HEK293 (cell line): ENCODE measurements at regions of chr9 and their contacts with region 1.

Region 1: DNA sequence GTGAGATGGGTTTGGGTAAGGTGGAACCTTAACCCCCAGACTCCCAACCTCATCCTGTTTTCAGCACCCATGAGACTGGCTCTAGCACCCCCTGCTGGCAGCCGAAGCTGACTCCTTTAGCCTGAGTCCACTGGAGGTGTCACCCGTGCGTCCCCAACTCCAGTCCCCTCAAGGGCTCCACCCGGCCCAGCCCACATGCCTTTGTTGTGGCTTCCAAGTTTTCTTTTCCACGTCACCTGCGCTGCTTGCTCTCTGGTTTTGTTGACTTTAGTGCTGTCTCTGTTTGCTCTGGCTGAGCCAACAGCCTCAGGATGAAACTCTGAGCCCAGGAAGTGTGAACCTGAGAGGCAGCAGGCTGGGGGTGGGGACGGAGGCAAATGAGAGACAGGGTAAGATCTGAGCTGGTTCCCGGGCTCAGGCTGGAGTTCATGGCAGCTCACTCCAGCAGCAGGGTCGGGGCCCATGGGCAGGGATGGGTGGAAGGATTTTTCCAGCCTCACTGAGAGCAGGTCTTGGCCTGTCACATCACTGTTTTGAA is 13.2 kb upstream of the AQP7 start:
- H3K4me3 ChIP-seq: no peak overlapping the region
- H3K27ac ChIP-seq: no peak overlapping the region
- H3K4me1 ChIP-seq: 0 out of 2 replicates have a peak, but pooled peaks cover 3% of the 10 kb centered on the region
- CTCF ChIP-seq: peak; percentile 72

Region 2: GRCh38 chr9:33404788-33405362 is 10.7 kb before region 1 on chr9:
- CTCF ChIA-PET with region 1: interaction called, 51 read pairs
- POLR2A ChIA-PET with region 1: no interaction called
- H3K4me3 ChIP-seq: no peak overlapping the region
- H3K27ac ChIP-seq: no peak overlapping the region
- H3K4me1 ChIP-seq: no peaks in the 10 kb centered on the region
- CTCF ChIP-seq: no peak

Region 3: DNA sequence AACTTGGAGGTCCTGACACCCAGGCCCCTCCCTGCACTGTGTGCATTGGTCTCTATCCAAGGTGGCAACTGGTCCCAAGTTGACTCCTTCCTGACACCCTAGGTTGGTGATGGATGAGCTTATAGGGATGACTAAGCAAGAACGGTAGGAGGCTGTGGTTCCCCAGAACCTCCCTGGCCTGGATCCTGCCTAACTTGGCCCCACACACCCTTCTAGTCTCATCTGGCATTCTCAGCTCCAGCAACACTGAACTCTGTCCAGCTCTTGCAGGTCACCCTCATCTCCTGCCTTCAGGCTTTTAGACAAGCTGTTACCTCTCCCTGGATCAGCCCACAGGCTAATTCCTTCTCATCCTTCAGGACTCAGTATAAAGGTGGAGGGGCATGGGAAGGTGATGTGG is 15.4 kb after region 1 on chr9:
- CTCF ChIA-PET with region 1: interaction called, 24 read pairs
- POLR2A ChIA-PET with region 1: no interaction called
- H3K4me3 ChIP-seq: no peak overlapping the region
- H3K27ac ChIP-seq: no peak overlapping the region
- H3K4me1 ChIP-seq: no peaks in the 10 kb centered on the region
- CTCF ChIP-seq: no peak

Region 4: DNA sequence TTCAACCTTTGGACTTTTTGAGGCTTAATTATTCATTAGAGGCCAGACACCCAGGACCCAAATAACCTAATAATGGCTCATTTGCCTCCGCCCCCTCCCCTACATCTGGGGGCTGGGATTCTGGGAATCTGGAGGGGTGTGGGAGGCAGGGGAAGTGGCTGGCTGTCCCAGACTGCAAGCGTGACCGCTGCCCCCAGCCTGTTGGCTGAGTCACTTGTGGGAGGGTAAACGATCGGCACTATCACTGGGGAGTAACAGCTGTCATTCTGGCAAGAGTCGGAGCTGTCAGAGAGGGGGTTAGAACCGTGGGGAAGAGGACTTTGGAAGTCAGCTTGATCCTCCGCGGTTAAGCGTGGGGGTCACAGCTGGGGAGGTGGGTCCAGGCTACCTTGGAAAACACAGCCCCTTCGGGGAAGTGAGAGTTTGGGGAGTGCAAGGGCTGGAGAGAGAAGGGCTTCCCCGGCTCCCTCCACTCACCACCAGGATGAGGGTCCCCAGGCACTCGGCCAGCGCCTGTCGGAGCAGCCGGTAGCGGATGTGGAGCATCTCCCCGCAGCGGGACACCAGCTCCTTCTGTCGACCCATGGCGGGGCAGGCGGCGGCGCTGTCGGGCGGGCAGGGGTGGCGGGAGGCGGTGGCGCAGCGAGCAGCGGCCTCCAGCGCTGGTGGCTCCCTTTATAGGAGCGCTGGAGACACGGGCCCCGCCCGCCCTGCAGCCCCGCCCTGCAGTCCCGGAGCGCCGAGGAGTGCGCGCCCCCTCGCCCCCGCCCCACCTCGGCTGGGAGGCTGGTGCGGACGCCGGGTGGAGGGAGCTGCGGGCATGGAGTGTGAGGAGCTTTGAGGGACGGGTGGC is 31.6 kb after region 1 on chr9 and contains the start of gene AQP3:
- CTCF ChIA-PET with region 1: interaction called, 47 read pairs
- POLR2A ChIA-PET with region 1: interaction called, 5 read pairs
- H3K4me3 ChIP-seq: peak within 1 kb of the TSS; percentile 46
- H3K27ac ChIP-seq: no peak within 1 kb of the TSS; the same call in 1 of the 2 replicates
- H3K4me1 ChIP-seq: no peaks in the 10 kb centered on the region; the same call in 1 of the 2 replicates
- CTCF ChIP-seq: peak; percentile 59

Region 5: GRCh38 chr9:33452828-33453271 is 37.3 kb after region 1 on chr9:
- CTCF ChIA-PET with region 1: interaction called, 47 read pairs
- POLR2A ChIA-PET with region 1: interaction called, 5 read pairs
- H3K4me3 ChIP-seq: no peak overlapping the region
- H3K27ac ChIP-seq: no peak overlapping the region
- H3K4me1 ChIP-seq: no peaks in the 10 kb centered on the region
- CTCF ChIP-seq: 0 out of 2 replicates have a peak, but pooled peaks have one; percentile 33

Region 6: DNA sequence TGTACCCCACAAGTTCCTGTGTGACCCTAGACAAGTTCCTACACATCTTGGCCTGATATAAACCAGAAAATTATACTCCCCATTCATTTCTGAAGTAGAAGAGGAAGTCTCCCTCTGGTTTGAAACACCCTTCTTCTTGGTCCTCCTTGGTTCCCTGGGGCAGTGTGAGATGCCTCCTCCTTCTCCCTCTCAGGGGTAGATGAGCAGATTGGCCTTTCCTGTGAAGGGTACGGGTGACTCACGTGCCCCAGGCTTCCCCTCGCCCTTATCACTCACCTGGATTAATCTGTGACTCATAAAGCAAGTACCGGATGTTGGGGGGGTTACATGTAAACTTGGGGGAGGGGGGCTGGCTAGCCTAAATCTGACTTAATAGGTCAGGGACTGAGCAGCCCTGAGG is 42.9 kb after region 1 on chr9:
- CTCF ChIA-PET with region 1: interaction called, 20 read pairs
- POLR2A ChIA-PET with region 1: interaction called, 3 read pairs
- H3K4me3 ChIP-seq: no peak overlapping the region
- H3K27ac ChIP-seq: no peak overlapping the region
- H3K4me1 ChIP-seq: no peaks in the 10 kb centered on the region
- CTCF ChIP-seq: no peak